CD8-positive, alpha-beta T cell (primary cell): ENCODE measurements at regions of chr7 and their contacts with region 1.

Region 1: GRCh38 chr7:104469166-104469820 is 140.9 kb downstream of the LHFPL3 start:
- DNase-seq: no peak
- ATAC-seq: no peak
- H3K4me3 ChIP-seq: no peak overlapping the region
- H3K4me3 Mint-ChIP-seq: no peak overlapping the region
- H3K27ac ChIP-seq: no peak overlapping the region
- H3K27ac Mint-ChIP-seq: no peak overlapping the region
- H3K4me1 ChIP-seq: no peaks in the 10 kb centered on the region
- H3K4me1 Mint-ChIP-seq: no peaks in the 10 kb centered on the region
- H3K27me3 ChIP-seq: no peaks in the 10 kb centered on the region
- H3K27me3 Mint-ChIP-seq: no peaks in the 10 kb centered on the region
- CTCF ChIP-seq: no peak

Region 2: GRCh38 chr7:104351012-104351411 is 118.3 kb before region 1 on chr7:
- CTCF ChIA-PET with region 1: no interaction called
- POLR2A ChIA-PET with region 1: no interaction called
- intact Hi-C with region 1: no loop called
- DNase-seq: no peak
- ATAC-seq: no peak
- H3K4me3 ChIP-seq: no peak overlapping the region
- H3K4me3 Mint-ChIP-seq: no peak overlapping the region
- H3K27ac ChIP-seq: no peak overlapping the region
- H3K27ac Mint-ChIP-seq: no peak overlapping the region
- H3K4me1 ChIP-seq: no peaks in the 10 kb centered on the region
- H3K4me1 Mint-ChIP-seq: no peaks in the 10 kb centered on the region
- H3K27me3 ChIP-seq: no peaks in the 10 kb centered on the region
- H3K27me3 Mint-ChIP-seq: peaks cover 2% of the 10 kb centered on the region
- CTCF ChIP-seq: no peak

Region 3: DNA sequence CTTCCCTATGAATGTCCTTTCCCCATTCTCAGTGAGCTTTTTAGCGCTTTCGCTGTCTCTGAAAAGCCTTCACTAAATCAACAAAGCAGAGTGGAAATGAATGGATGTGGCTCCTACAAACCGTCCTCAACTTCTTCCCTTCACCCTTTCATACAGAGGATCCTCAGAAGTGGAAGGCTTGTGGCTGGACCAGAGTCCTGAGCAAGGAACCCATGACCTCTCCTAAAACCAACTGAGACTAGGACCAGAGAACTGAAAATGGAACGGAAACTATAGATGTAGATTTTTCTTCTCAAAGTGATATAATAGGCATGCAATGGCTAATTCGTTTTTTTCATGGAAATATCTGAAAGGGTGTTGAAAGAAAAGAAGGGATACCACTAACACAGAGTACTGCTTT is 18.4 kb before region 1 on chr7:
- CTCF ChIA-PET with region 1: no interaction called
- POLR2A ChIA-PET with region 1: no interaction called
- intact Hi-C with region 1: loop called in 1 of 2 experiments (anchors 1 kb)
- DNase-seq: no peak
- ATAC-seq: no peak
- H3K4me3 ChIP-seq: no peak overlapping the region
- H3K4me3 Mint-ChIP-seq: no peak overlapping the region
- H3K27ac ChIP-seq: no peak overlapping the region
- H3K27ac Mint-ChIP-seq: no peak overlapping the region
- H3K4me1 ChIP-seq: no peaks in the 10 kb centered on the region
- H3K4me1 Mint-ChIP-seq: no peaks in the 10 kb centered on the region
- H3K27me3 ChIP-seq: no peaks in the 10 kb centered on the region
- H3K27me3 Mint-ChIP-seq: peaks cover 2% of the 10 kb centered on the region
- CTCF ChIP-seq: no peak